IMR-90 (cell line): ENCODE measurements at regions of chrX and their contacts with region 1.

Region 1: DNA sequence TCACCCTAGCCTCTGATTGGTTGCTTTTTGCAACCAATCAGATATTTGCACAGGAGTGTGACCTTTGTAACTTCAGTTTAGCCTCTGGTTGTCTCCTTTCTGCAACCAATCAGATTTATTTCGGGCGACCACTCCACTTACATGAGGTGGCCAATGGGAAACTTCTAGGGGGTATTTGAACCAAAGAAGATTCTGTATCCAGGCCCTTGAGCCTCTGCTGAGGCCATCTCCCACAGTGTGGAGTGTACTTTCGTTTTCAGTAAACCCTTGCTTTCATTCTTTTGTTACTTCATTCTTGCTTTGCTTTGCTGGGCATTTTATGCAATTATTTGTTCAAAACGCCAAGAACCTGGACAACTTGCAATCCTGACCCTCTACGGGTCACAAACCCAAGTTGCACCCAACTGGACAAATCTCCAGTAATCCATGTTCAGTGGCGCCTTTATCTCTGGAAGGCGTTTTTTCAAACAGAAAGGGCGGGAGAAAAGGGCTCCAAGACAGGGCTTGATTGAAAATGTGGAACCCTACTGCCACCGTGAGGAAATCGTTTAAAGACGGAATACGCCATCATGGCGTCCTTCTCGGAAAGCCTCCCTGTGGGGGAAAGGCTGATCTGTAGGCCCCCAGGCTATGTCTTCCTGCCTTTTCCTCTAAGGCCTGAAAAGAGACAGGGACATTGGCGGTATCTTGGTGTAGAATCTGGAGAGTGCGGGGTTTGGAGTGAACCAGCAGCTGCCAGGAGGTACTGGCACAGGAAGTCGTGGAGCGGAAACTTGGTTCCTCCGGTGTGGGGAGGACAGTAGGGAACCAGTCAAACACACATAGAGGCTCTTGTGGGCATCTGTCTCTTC is 184.6 kb downstream of the OR13H1 start:
- DNase-seq: peak; percentile 86
- ATAC-seq: peak; percentile 72
- H3K4me3 ChIP-seq: peak overlapping the region; percentile 65
- H3K27ac ChIP-seq: peak overlapping the region; percentile 99
- H3K4me1 ChIP-seq: no peaks in the 10 kb centered on the region
- H3K27me3 ChIP-seq: no peaks in the 10 kb centered on the region; the same call in 1 of the 2 replicates
- CTCF ChIP-seq: peak; percentile 67
- POLR2A ChIP-seq: no peak
- RAD21 ChIP-seq: peak; percentile 75

Region 2: DNA sequence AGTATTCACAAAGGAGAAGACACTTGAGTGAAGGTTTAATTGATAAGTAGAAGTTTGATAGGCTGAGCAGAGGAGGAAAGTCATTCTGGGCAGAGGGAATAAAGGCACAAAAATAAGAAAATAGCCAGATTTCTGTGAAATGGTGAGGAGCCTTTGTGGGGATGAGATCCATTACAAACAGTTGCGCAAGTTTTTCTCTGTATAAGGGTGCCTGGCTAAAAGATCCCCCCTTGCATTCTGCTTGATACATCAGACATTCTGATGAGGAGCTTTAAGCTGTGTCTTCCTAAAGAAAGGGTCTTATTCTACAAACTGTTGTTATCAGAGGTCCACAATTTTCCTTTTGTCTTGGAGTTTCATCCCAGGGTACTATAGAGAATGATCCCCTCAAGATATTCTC is 558.4 kb before region 1 on chrX:
- CTCF ChIA-PET with region 1: no interaction called
- POLR2A ChIA-PET with region 1: no interaction called
- dilution Hi-C with region 1: no loop called
- in situ Hi-C with region 1: no loop called
- intact Hi-C with region 1: no loop called
- DNase-seq: no peak
- ATAC-seq: no peak
- H3K4me3 ChIP-seq: no peak overlapping the region
- H3K27ac ChIP-seq: no peak overlapping the region
- H3K4me1 ChIP-seq: no peaks in the 10 kb centered on the region
- H3K27me3 ChIP-seq: no peaks in the 10 kb centered on the region
- CTCF ChIP-seq: no peak
- POLR2A ChIP-seq: no peak
- RAD21 ChIP-seq: no peak

Region 3: DNA sequence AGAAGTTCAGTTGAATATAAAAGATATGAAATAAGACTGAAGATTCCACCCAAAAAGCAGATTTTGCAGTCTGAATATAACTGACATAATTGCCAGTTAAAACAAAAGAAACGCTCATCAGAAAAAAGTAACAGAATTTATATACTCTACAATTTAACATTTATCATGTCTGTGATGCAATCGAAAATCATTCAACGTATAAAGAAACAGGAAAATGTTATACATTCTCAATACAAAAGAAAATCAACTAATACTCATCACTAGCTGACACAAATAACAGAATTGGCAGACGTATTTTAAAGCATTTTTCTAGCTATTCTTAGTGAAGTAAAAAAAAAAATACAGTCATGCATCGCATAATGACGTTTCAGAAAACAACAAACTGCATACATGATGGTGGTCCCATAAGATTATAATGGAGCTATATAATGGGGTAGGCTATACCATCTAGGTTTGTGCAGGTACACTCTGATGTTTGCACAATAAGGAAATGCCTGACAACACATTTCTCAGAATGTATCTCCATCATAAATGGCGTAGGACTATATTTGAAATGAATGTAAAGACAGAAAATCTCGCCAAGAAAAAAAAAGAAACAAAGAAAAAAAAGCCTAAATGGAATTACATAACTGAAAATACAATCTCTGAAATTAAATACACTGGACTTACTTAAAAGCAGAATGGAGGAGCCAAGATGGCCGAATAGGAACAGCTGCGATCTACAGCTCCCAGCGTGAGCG is 150.4 kb before region 1 on chrX:
- CTCF ChIA-PET with region 1: no interaction called
- POLR2A ChIA-PET with region 1: no interaction called
- dilution Hi-C with region 1: no loop called
- in situ Hi-C with region 1: no loop called
- intact Hi-C with region 1: no loop called
- DNase-seq: no peak
- ATAC-seq: no peak
- H3K4me3 ChIP-seq: no peak overlapping the region
- H3K27ac ChIP-seq: no peak overlapping the region
- H3K4me1 ChIP-seq: no peaks in the 10 kb centered on the region
- H3K27me3 ChIP-seq: no peaks in the 10 kb centered on the region
- CTCF ChIP-seq: no peak
- POLR2A ChIP-seq: no peak
- RAD21 ChIP-seq: no peak

Region 4: DNA sequence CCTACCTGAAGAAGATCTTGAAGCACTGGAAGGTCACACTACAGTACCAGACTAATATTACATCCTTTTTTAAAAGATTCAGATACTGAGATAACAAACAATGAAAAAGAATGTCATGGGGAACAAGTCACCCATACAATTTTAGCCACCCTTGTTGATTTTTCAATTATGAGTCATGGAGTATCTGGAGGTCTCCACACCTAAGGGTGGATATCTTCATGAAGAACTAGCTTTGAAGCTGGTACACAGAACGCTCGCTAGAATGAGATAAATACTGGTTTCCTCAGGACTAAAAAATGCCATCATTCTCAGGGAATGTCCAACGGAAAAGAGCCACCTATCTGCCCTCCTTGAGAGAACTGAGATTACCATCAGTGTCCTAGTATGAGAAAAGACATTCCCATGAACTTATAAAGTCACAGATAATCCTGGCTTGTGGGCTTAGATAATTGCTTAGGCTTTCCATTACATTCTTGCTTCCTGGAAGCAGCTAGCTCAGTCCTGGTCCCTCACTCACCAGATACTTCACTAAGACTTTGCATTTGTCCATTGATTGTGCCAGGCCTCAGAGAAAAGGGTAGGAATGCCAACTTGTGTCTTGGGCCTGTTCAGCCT is 18.0 kb before region 1 on chrX:
- CTCF ChIA-PET with region 1: no interaction called
- POLR2A ChIA-PET with region 1: no interaction called
- dilution Hi-C with region 1: no loop called
- in situ Hi-C with region 1: no loop called
- intact Hi-C with region 1: loop called (anchors 2 kb)
- DNase-seq: no peak
- ATAC-seq: no peak; the same call in 1 of the 2 replicates
- H3K4me3 ChIP-seq: peak overlapping the region; percentile 12; the same call in 1 of the 2 replicates
- H3K27ac ChIP-seq: no peak overlapping the region
- H3K4me1 ChIP-seq: no peaks in the 10 kb centered on the region
- H3K27me3 ChIP-seq: no peaks in the 10 kb centered on the region
- CTCF ChIP-seq: no peak
- POLR2A ChIP-seq: no peak
- RAD21 ChIP-seq: no peak

Region 5: DNA sequence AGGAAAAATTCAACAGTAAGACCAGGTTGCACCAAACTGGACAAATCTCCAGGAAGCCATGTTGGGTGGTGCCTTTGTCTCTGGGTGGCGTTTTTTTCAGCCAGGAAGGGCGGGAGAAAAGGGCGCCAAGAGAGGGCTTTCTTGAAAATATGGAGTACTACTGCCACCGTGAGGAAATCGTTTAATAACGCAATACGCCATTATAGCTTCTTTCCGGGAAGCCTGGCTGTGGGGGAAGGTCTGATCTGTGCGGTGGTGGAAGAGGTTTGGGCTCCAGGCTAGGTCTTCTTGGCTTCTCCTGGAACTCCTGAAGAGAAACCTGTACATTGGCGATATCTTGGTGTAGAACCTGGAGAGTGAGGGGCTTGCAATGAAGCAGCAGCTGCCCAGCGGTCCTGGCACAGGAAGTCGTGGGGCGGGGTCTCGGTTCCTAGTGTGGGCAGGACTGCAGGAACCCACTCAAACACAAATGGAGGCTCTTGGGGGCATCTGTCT is 18.0 kb after region 1 on chrX:
- CTCF ChIA-PET with region 1: no interaction called
- POLR2A ChIA-PET with region 1: no interaction called
- dilution Hi-C with region 1: no loop called
- in situ Hi-C with region 1: no loop called
- intact Hi-C with region 1: loop called (anchors 1 kb)
- DNase-seq: peak; percentile 86
- ATAC-seq: peak; percentile 73
- H3K4me3 ChIP-seq: peak overlapping the region; percentile 60
- H3K27ac ChIP-seq: peak overlapping the region; percentile 95
- H3K4me1 ChIP-seq: no peaks in the 10 kb centered on the region
- H3K27me3 ChIP-seq: no peaks in the 10 kb centered on the region
- CTCF ChIP-seq: peak; percentile 64
- POLR2A ChIP-seq: no peak
- RAD21 ChIP-seq: peak; percentile 69

Region 6: GRCh38 chrX:131778269-131779218 is 50.0 kb after region 1 on chrX:
- CTCF ChIA-PET with region 1: no interaction called
- POLR2A ChIA-PET with region 1: no interaction called
- dilution Hi-C with region 1: no loop called
- in situ Hi-C with region 1: no loop called
- intact Hi-C with region 1: loop called (anchors 1 kb)
- DNase-seq: peak; percentile 76
- ATAC-seq: peak; percentile 89
- H3K4me3 ChIP-seq: peak overlapping the region; percentile 85
- H3K27ac ChIP-seq: peak overlapping the region; percentile 94; the same call in 1 of the 2 replicates
- H3K4me1 ChIP-seq: 0 out of 2 replicates have a peak, but pooled peaks cover 2% of the 10 kb centered on the region
- H3K27me3 ChIP-seq: peaks cover 2% of the 10 kb centered on the region; the same call in 1 of the 2 replicates
- CTCF ChIP-seq: peak; percentile 62
- POLR2A ChIP-seq: no peak
- RAD21 ChIP-seq: peak; percentile 65

Region 7: DNA sequence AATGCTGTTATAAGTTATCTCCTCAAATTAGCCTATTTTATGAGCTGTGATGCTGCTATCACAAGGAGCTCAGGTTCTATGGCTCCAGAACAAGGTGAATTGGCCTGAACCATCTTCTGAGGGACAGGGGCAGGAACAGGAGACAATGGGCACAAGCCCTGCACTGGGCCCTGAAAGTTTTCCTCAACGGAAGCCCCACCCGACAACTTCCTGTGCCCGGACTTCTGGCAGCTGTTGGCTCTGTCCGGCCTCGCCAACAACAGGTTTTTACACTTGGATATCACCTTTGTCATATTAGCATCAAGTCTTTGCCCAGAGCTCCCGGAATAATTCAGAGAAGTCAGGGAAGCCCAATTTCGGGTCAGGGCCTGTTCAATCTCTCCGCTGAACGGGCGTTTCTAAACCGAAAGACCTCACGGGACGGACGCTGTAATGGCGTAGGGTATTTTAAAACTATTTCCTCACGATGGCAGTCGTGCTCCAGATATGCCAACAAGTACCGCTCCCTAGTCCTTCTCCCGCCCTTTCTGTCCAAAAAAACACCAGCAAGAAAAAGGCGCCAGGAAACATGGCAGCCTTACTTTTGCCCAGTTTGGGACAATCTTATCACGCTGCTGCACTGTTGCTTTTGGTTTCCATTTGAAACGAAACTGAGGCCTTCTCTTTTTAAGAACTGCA is 93.6 kb after region 1 on chrX:
- CTCF ChIA-PET with region 1: no interaction called
- POLR2A ChIA-PET with region 1: no interaction called
- dilution Hi-C with region 1: no loop called
- in situ Hi-C with region 1: no loop called
- intact Hi-C with region 1: loop called (anchors 2 kb)
- DNase-seq: peak; percentile 85
- ATAC-seq: peak; percentile 94
- H3K4me3 ChIP-seq: peak overlapping the region; percentile 61
- H3K27ac ChIP-seq: peak overlapping the region; percentile 94
- H3K4me1 ChIP-seq: no peaks in the 10 kb centered on the region
- H3K27me3 ChIP-seq: peaks cover 5% of the 10 kb centered on the region
- CTCF ChIP-seq: peak; percentile 70
- POLR2A ChIP-seq: no peak
- RAD21 ChIP-seq: peak; percentile 76